ENCODE measurements at regions of chr11 and their contacts with region 1.

Region 1: DNA sequence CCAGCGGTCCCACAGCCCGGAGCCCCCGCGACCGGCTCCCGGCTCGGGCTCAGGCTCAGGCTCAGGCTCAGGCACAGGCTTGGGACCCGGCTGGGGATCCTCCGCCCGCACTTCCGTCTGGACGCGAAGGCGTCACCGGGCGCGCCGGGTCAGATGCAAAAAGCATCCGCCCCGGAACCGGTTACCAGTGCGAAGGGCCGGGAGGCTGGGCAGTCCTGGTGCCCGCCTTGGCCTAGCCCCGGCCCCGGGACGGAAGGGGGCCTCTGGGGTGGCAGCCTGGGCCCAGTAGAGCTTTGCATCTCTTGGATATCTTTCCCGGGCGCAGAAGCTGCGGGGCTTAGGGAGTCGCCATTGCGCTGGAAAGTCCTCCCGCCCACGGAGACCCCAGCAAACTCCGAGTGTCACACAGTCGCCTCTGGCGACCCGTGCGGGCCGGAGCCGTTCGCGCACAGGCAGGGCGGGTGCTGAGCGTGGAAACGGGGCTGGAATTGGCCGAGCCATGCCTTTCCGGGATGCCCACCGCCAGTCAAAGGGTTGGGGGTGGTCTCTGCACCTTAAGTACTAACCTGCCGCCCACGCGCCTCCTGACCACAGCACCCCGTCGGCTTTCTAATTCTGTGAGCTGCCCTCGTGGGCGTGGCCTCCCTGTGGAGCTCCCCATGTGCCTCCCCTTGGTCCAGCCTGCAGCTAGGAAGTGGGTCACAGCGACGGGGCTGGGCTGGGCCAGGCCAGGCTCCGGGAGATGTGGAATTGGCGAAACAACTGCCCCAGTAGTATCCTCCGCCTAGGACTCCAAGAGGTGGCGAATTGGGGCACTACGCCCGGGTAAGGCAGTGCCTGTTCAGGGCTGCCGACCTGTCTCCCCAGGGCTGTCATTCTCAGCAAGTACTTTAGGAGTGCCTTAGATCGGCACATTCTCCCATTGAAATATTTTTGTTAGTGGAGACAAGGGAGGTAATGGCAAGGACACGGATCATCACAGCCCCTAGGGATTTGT is at the start of gene TMEM9B:
- DNase-seq: peak; percentile 97
- total RNA-seq, gene TMEM9B: 43.7 TPM

Region 2: GRCh38 chr11:8688414-8689362 is 275.9 kb before region 1 on chr11:
- intact Hi-C with region 1: loop called (anchors 5 kb)
- DNase-seq: peak; percentile 97

Region 3: GRCh38 chr11:8922691-8923090 is 41.9 kb before region 1 on chr11:
- intact Hi-C with region 1: no loop called
- DNase-seq: no peak

Measured in cardiac septum (tissue), 1 donor.